ENCODE measurements at regions of chr19 and their contacts with region 1.

Region 1: GRCh38 chr19:41321600-41322270 is 11.8 kb downstream of the CCDC97 start:
- DNase-seq: no peak
- H3K4me3 ChIP-seq: no peak overlapping the region
- H3K27ac ChIP-seq: peak overlapping the region; percentile 36 to 94 (median 90)
- H3K4me1 ChIP-seq: peaks cover 42 to 81% (median 62%) of the 10 kb centered on the region in 6 donors
- H3K27me3 ChIP-seq: no peaks in the 10 kb centered on the region
- CTCF ChIP-seq: peak; percentile 39 to 83 (median 70)
- POLR2A ChIP-seq: no peak

Region 2: DNA sequence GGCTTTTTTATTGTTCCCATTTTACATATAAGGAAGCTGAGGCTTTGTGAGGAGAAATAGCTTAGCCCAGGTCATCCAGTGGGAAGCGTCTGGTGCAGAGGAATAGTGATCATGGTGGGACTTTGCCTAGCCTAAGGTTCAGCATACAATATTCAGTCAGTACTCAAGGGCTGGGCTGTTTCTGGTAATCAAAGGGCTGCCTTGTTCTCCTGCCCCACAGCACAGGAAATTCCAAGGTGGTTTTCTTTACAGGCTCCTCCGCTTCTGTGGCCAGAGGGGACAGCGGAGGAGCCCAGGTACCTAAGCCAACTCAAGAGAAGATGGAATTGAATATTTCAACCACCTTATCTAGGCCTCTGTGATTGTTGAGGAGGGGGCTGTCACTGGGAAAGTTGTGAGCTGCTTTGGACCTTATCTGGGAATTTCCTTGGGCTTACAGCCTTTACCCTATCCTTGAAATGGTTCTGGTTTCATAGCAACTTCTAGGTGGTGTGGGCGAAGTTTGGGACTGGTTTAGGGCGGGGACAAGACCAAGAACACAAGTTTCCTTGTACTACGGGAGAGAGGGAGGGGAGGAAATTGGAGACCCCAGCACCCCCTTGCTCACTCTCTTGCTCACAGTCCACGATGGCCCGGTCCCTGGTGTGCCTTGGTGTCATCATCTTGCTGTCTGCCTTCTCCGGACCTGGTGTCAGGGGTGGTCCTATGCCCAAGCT is 546.7 kb before region 1 on chr19 and contains the start of gene MIA:
- intact Hi-C with region 1: no loop called
- DNase-seq: no peak
- H3K4me3 ChIP-seq: no peak within 1 kb of the TSS
- H3K27ac ChIP-seq: peak within 1 kb of the TSS in 3 of 8 donors; percentile 98 to 100 (median 99)
- H3K4me1 ChIP-seq: peaks cover 10 to 53% (median 29%) of the 10 kb centered on the region in 6 donors
- H3K27me3 ChIP-seq: no peaks in the 10 kb centered on the region
- CTCF ChIP-seq: no peak
- POLR2A ChIP-seq: no peak
- total RNA-seq, gene MIA: 1.5 TPM in 1 of 7 donors, not detected in the others

Region 3: GRCh38 chr19:41273076-41273475 is 48.7 kb before region 1 on chr19:
- intact Hi-C with region 1: no loop called
- DNase-seq: no peak
- H3K4me3 ChIP-seq: no peak overlapping the region
- H3K27ac ChIP-seq: no peak overlapping the region
- H3K4me1 ChIP-seq: peaks cover 0 to 19% (median 4%) of the 10 kb centered on the region in 6 donors
- H3K27me3 ChIP-seq: no peaks in the 10 kb centered on the region
- CTCF ChIP-seq: no peak
- POLR2A ChIP-seq: no peak

Region 4: GRCh38 chr19:41356984-41357739 is 35.4 kb after region 1 on chr19:
- intact Hi-C with region 1: loop called (anchors 5 kb)
- DNase-seq: no peak
- H3K4me3 ChIP-seq: no peak overlapping the region
- H3K27ac ChIP-seq: peak overlapping the region in 7 of 8 donors; percentile 29 to 98 (median 63)
- H3K4me1 ChIP-seq: peaks cover 23 to 68% (median 47%) of the 10 kb centered on the region in 6 donors
- H3K27me3 ChIP-seq: no peaks in the 10 kb centered on the region
- CTCF ChIP-seq: no peak
- POLR2A ChIP-seq: no peak

Region 5: GRCh38 chr19:41457241-41457640 is 135.5 kb after region 1 on chr19:
- intact Hi-C with region 1: no loop called
- DNase-seq: no peak
- H3K4me3 ChIP-seq: no peak overlapping the region
- H3K27ac ChIP-seq: no peak overlapping the region
- H3K4me1 ChIP-seq: peaks cover 0 to 33% (median 10%) of the 10 kb centered on the region in 6 donors
- H3K27me3 ChIP-seq: peaks cover 0 to 10% (median 0%) of the 10 kb centered on the region in 7 donors
- CTCF ChIP-seq: no peak
- POLR2A ChIP-seq: no peak

Measured in spleen (tissue), 13 donors.